SK-N-SH (cell line): ENCODE measurements at regions of chr2 and their contacts with region 1.

Region 1: GRCh38 chr2:218269899-218270720 is at the starts of genes AAMP and PNKD:
- DNase-seq: peak; percentile 99
- H3K4me3 ChIP-seq: peak within 1 kb of the TSS; percentile 85 to 98
- H3K27ac ChIP-seq: peak within 1 kb of the TSS; percentile 86 to 88; a peak in 3 of 4 replicates
- H3K4me1 ChIP-seq: peaks cover 14 to 19% of the 10 kb centered on the region in 2 experiments; a peak in 1 of 4 replicates
- H3K27me3 ChIP-seq: no peaks in the 10 kb centered on the region
- CTCF ChIP-seq: 0 out of 2 replicates have a peak, but pooled peaks have one; percentile 8
- EP300 ChIP-seq: no peak
- RAD21 ChIP-seq: peak; percentile 29
- polyA plus RNA-seq, gene AAMP: 223 and 276 TPM in 2 replicates
- polyA plus RNA-seq, gene PNKD: 92.2 and 101 TPM in 2 replicates

Region 2: DNA sequence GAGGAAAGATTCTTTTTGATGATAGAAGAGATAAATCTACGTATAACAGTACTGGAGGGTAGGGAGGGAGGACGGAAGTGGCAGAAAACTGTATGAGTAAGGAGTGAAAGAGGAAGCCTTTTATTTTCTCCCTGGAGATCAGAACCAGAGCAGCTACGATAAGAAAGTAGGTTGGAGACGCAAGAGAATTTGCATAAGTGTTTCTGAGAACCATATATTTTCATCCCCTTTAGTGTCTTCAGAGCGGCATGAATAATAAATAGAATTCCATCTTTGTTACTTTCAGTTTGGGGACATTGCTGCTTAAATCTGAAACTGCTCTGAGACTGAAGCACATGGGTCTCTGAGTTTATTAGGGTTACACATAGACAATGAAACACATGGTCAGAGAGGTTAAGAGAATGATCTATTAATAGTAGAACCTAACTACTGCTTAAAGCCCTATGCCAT is 1180.1 kb before region 1 on chr2:
- CTCF ChIA-PET with region 1: no interaction called
- POLR2A ChIA-PET with region 1: no interaction called
- DNase-seq: no peak
- H3K4me3 ChIP-seq: no peak overlapping the region
- H3K27ac ChIP-seq: peak overlapping the region in 1 of 2 experiments; percentile 23; a peak in 2 of 4 replicates
- H3K4me1 ChIP-seq: no peaks in the 10 kb centered on the region; a peak in 2 of 4 replicates
- H3K27me3 ChIP-seq: no peaks in the 10 kb centered on the region
- CTCF ChIP-seq: no peak
- EP300 ChIP-seq: no peak
- RAD21 ChIP-seq: no peak

Region 3: DNA sequence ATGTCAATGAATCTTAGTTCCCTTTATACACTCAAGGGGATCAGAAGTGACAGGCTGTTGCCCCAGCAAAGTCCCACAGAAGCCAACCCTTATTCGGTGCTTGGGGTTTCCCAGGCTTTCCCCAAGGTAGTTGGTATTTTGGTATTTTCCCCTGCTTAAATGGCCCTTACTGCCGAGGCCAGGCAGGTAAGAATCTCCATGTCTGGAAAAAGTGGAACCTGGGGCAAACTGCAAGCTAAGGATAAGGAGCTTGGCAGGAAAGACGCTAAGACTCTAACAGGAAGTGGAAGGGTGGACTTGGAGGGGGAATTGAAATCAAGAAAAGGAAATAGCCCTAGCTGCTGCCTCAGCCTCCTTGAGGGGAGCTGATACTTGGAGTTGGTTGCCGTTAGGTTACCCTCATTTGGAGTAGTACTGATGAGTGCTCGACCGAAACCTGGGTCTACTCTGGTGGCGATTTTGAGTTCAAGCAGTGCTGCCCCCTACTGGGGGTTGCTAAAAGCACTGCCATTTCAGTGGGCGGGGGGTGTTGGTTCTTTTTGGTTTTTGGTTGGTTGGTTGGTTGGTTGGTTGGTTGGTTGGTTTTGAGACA is 12.6 kb before region 1 on chr2:
- CTCF ChIA-PET with region 1: interaction called, 19 read pairs
- POLR2A ChIA-PET with region 1: interaction called, 3 read pairs
- DNase-seq: peak; percentile 51
- H3K4me3 ChIP-seq: no peak overlapping the region
- H3K27ac ChIP-seq: no peak overlapping the region; a peak in 1 of 4 replicates
- H3K4me1 ChIP-seq: peaks cover 11 to 41% of the 10 kb centered on the region in 2 experiments
- H3K27me3 ChIP-seq: no peaks in the 10 kb centered on the region
- CTCF ChIP-seq: peak; percentile 76
- EP300 ChIP-seq: no peak
- RAD21 ChIP-seq: no peak

Region 4: GRCh38 chr2:218286570-218287459 is 16.7 kb after region 1 on chr2:
- CTCF ChIA-PET with region 1: interaction called, 47 read pairs
- POLR2A ChIA-PET with region 1: no interaction called
- DNase-seq: peak; percentile 73
- H3K4me3 ChIP-seq: peak overlapping the region; percentile 48 to 64
- H3K27ac ChIP-seq: peak overlapping the region; percentile 88 to 99
- H3K4me1 ChIP-seq: peaks cover 12 to 33% of the 10 kb centered on the region in 2 experiments; a peak in 3 of 4 replicates
- H3K27me3 ChIP-seq: no peaks in the 10 kb centered on the region
- CTCF ChIP-seq: no peak
- EP300 ChIP-seq: no peak
- RAD21 ChIP-seq: no peak

Region 5: GRCh38 chr2:218295029-218295428 is 24.9 kb after region 1 on chr2:
- CTCF ChIA-PET with region 1: interaction called, 13 read pairs
- POLR2A ChIA-PET with region 1: no interaction called
- DNase-seq: no peak
- H3K4me3 ChIP-seq: no peak overlapping the region
- H3K27ac ChIP-seq: no peak overlapping the region
- H3K4me1 ChIP-seq: peaks cover 0 to 5% of the 10 kb centered on the region in 2 experiments; a peak in 1 of 4 replicates
- H3K27me3 ChIP-seq: no peaks in the 10 kb centered on the region
- CTCF ChIP-seq: no peak
- EP300 ChIP-seq: no peak
- RAD21 ChIP-seq: no peak

Region 6: GRCh38 chr2:218360447-218360846 is 90.3 kb after region 1 on chr2:
- CTCF ChIA-PET with region 1: interaction called, 31 read pairs
- POLR2A ChIA-PET with region 1: interaction called, 3 read pairs
- DNase-seq: no peak
- H3K4me3 ChIP-seq: no peak overlapping the region
- H3K27ac ChIP-seq: no peak overlapping the region
- H3K4me1 ChIP-seq: peaks cover 0 to 4% of the 10 kb centered on the region in 2 experiments; a peak in 1 of 4 replicates
- H3K27me3 ChIP-seq: no peaks in the 10 kb centered on the region
- CTCF ChIP-seq: no peak
- EP300 ChIP-seq: no peak
- RAD21 ChIP-seq: no peak

Region 7: DNA sequence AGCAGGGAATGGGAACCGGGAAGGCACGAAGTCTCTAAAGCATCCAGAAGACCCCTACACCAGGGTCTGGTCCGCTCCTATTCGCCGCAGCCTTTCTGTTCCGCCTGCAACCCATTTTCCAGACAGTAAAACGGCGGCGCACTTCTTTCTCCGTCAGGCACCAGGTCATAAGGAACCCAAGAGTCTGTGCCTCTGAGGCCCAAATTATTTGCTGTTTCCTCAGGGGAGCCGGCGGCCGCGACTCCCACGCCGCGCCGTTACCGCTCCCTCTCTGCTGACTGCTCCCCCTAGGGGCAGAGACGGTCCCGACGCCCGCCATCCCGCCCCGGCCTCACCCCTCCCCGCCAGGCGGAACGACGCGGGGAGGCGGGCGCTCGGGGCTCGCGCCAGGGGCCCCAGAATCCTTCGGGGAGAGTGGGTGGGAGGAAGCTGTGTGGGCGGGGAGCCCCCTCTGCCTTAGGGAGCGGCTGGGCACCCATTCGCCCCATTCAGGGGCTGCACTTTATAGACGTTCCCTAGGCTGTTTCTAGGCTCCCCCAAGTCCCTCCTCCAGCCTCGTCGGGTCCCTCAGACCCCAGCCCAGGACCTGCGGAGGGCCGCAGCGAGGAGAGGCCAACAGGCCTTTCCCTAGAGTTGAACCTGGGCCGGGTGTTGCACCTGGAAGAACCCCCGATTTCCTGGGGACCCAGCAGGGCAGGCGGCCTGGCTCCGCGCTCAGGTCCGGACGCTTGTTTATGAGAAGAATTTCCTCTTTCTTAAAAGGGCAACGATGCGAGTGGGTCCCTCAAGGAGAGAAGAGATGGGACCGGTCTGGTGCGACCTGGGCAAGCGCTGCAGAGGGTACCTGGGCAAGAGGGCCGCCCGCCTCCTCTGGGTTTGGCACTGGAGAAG is 125.9 kb after region 1 on chr2:
- CTCF ChIA-PET with region 1: interaction called, 27 read pairs
- POLR2A ChIA-PET with region 1: interaction called, 4 read pairs
- DNase-seq: peak; percentile 96
- H3K4me3 ChIP-seq: peak overlapping the region; percentile 88 to 92
- H3K27ac ChIP-seq: peak overlapping the region; percentile 95 to 98
- H3K4me1 ChIP-seq: peaks cover 15 to 26% of the 10 kb centered on the region in 2 experiments; a peak in 3 of 4 replicates
- H3K27me3 ChIP-seq: no peaks in the 10 kb centered on the region
- CTCF ChIP-seq: peak; percentile 83
- EP300 ChIP-seq: no peak
- RAD21 ChIP-seq: peak; percentile 67